ENCODE measurements at regions of chr3 and their contacts with region 1.

Region 1: GRCh38 chr3:71006810-71007785 is 576.4 kb downstream of the FOXP1 start:
- DNase-seq: no peak
- ATAC-seq: peak; percentile 58

Region 2: GRCh38 chr3:70716832-70717231 is 290.3 kb before region 1 on chr3:
- intact Hi-C with region 1: loop called (anchors 10 kb)
- DNase-seq: peak; percentile 43
- ATAC-seq: no peak

Region 3: GRCh38 chr3:71064288-71064955 is 57.3 kb after region 1 on chr3:
- intact Hi-C with region 1: loop called (anchors 5 kb)
- DNase-seq: peak; percentile 72
- ATAC-seq: peak; percentile 30

Region 4: GRCh38 chr3:71305231-71306206 is 298.4 kb after region 1 on chr3:
- intact Hi-C with region 1: loop called (anchors 2 kb)
- DNase-seq: no peak
- ATAC-seq: peak; percentile 86